Spleen (tissue), 13 donors: ENCODE measurements at regions of chr12 and their contacts with region 1.

Region 1: GRCh38 chr12:119780786-119781434 is 96.2 kb downstream of the CIT start:
- DNase-seq: no peak
- H3K4me3 ChIP-seq: no peak overlapping the region
- H3K27ac ChIP-seq: no peak overlapping the region
- H3K4me1 ChIP-seq: peaks cover 0 to 4% (median 0%) of the 10 kb centered on the region in 6 donors
- H3K27me3 ChIP-seq: no peaks in the 10 kb centered on the region
- CTCF ChIP-seq: peak; percentile 21 to 72 (median 56)
- POLR2A ChIP-seq: no peak

Region 2: GRCh38 chr12:119660076-119660475 is 120.8 kb before region 1 on chr12:
- intact Hi-C with region 1: loop called (anchors 5 kb)
- DNase-seq: no peak
- H3K4me3 ChIP-seq: no peak overlapping the region
- H3K27ac ChIP-seq: peak overlapping the region in 1 of 8 donors; percentile 3
- H3K4me1 ChIP-seq: peaks cover 0 to 15% (median 5%) of the 10 kb centered on the region in 6 donors
- H3K27me3 ChIP-seq: no peaks in the 10 kb centered on the region
- CTCF ChIP-seq: no peak
- POLR2A ChIP-seq: no peak